Heart right ventricle (tissue), 16 donors: ENCODE measurements at regions of chr17 and their contacts with region 1.

Region 1: GRCh38 chr17:350706-351448 is 1.7 kb downstream of the RPH3AL start:
- DNase-seq: peak; percentile 83 to 92
- ATAC-seq: peak; percentile 87 to 93 (median 91)
- H3K4me3 ChIP-seq: no peak overlapping the region
- H3K27ac ChIP-seq: peak overlapping the region; percentile 79 to 96 (median 87)
- H3K4me1 ChIP-seq: peaks cover 25 to 68% (median 57%) of the 10 kb centered on the region in 9 donors
- H3K27me3 ChIP-seq: no peaks in the 10 kb centered on the region
- CTCF ChIP-seq: no peak

Region 2: GRCh38 chr17:301681-302298 is 49.1 kb before region 1 on chr17:
- intact Hi-C with region 1: loop called in 1 of 10 experiments (anchors 2 kb)
- DNase-seq: peak; percentile 60 to 70
- ATAC-seq: peak; percentile 44 to 82 (median 68)
- H3K4me3 ChIP-seq: peak overlapping the region in 4 of 10 donors; percentile 11 to 19 (median 16)
- H3K27ac ChIP-seq: peak overlapping the region; percentile 17 to 90 (median 81)
- H3K4me1 ChIP-seq: peaks cover 10 to 41% (median 25%) of the 10 kb centered on the region in 9 donors
- H3K27me3 ChIP-seq: peaks cover 0 to 19% (median 4%) of the 10 kb centered on the region in 7 donors
- CTCF ChIP-seq: no peak

Region 3: GRCh38 chr17:333626-334396 is 17.1 kb before region 1 on chr17:
- intact Hi-C with region 1: loop called in 2 of 10 experiments (anchors 2 kb)
- DNase-seq: peak; percentile 79 to 82
- ATAC-seq: peak; percentile 80 to 87 (median 85)
- H3K4me3 ChIP-seq: peak overlapping the region; percentile 10 to 65 (median 46)
- H3K27ac ChIP-seq: peak overlapping the region; percentile 88 to 97 (median 92)
- H3K4me1 ChIP-seq: peaks cover 11 to 56% (median 37%) of the 10 kb centered on the region in 9 donors
- H3K27me3 ChIP-seq: peaks cover 0 to 36% (median 0%) of the 10 kb centered on the region in 7 donors
- CTCF ChIP-seq: no peak

Region 4: DNA sequence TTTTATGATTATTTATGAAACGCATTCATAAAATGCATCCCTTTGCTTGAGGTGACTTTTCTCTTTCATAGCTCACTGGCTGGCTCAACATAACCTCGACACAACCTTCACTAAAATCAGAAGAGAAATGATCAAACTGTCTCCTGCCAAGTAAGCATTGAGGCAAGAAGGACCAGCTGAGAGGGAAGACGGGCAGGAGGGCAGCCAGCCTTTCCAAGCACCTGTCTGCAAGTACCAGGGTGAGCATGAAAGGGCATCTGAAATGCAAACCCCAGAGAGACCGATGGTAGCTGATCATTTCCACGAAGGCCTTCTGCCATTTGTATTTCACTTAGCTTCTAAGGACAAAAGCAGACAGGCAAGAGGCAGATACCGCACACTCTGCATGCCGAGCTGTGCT is 53.8 kb after region 1 on chr17:
- intact Hi-C with region 1: no loop called
- DNase-seq: no peak
- ATAC-seq: no peak
- H3K4me3 ChIP-seq: no peak overlapping the region
- H3K27ac ChIP-seq: no peak overlapping the region
- H3K4me1 ChIP-seq: peaks cover 0 to 5% (median 3%) of the 10 kb centered on the region in 9 donors
- H3K27me3 ChIP-seq: peaks cover 0 to 8% (median 0%) of the 10 kb centered on the region in 7 donors
- CTCF ChIP-seq: no peak

Region 5: GRCh38 chr17:652314-652713 is 301.4 kb after region 1 on chr17:
- intact Hi-C with region 1: no loop called
- DNase-seq: peak; percentile 77 to 86
- ATAC-seq: peak; percentile 89 to 97 (median 92)
- H3K4me3 ChIP-seq: no peak overlapping the region
- H3K27ac ChIP-seq: peak overlapping the region in 9 of 10 donors; percentile 10 to 78 (median 57)
- H3K4me1 ChIP-seq: peaks cover 0 to 26% (median 9%) of the 10 kb centered on the region in 9 donors
- H3K27me3 ChIP-seq: no peaks in the 10 kb centered on the region
- CTCF ChIP-seq: no peak